MCF 10A (cell line): ENCODE measurements at regions of chr20 and their contacts with region 1.

Region 1: DNA sequence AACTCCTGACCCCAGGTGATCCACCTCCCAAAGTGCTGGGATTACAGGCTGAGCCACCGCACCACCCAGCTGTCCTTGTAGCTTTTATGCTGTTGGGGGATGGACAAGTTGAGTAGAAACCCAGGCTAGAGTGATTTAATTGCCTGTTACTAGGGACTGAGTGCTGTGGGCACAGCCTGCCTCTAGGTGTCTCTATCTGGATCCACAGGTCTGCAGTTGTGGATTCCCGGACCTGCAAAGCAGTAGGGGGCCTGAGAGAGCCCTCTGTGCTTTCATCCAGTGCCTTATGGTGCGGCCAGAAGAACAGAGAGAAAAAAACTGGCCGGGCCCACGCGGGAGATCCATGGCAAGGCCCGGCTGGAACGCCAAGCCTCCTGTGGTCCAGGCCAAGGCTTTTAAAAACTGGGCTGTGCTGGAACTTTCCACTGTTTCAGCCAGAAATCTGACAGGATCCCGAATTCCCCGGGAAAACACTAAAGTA is 5.2 kb downstream of the SIRPA start:
- DNase-seq: peak; percentile 67
- H3K4me3 Mint-ChIP-seq: no peak overlapping the region
- H3K27ac Mint-ChIP-seq: no peak overlapping the region
- H3K4me1 Mint-ChIP-seq: peaks cover 22% of the 10 kb centered on the region
- H3K27me3 Mint-ChIP-seq: no peaks in the 10 kb centered on the region
- CTCF ChIP-seq: peak; percentile 35

Region 2: DNA sequence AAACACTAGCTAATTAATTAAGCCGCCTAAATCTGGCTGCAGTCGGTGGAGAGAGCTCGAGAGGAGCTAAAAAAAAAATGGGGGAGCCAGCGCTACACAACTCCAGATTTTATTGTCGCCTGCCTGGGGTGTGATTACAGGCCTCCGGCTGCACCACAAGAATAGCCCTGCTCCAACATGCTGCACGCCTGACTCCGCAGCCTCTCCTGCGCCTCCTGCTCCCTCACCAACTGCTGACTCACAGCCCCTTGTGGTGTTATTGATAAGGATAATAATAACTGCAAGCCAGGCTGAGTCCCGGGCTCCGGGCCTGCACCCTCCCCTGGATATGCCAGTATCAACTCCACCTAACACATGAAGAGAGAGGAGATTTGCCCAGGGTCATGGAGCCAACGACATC is 11.7 kb after region 1 on chr20:
- CTCF ChIA-PET with region 1: interaction called, 14 read pairs
- POLR2A ChIA-PET with region 1: interaction called, 3 read pairs
- intact Hi-C with region 1: no loop called
- DNase-seq: no peak
- H3K4me3 Mint-ChIP-seq: no peak overlapping the region
- H3K27ac Mint-ChIP-seq: no peak overlapping the region
- H3K4me1 Mint-ChIP-seq: peaks cover 13% of the 10 kb centered on the region
- H3K27me3 Mint-ChIP-seq: no peaks in the 10 kb centered on the region
- CTCF ChIP-seq: no peak

Region 3: GRCh38 chr20:2022163-2022562 is 121.8 kb after region 1 on chr20:
- CTCF ChIA-PET with region 1: no interaction called
- POLR2A ChIA-PET with region 1: no interaction called
- intact Hi-C with region 1: no loop called
- DNase-seq: peak; percentile 92
- H3K4me3 Mint-ChIP-seq: no peak overlapping the region
- H3K27ac Mint-ChIP-seq: no peak overlapping the region
- H3K4me1 Mint-ChIP-seq: no peaks in the 10 kb centered on the region
- H3K27me3 Mint-ChIP-seq: peaks cover 71% of the 10 kb centered on the region
- CTCF ChIP-seq: no peak